MCF 10A (cell line): ENCODE measurements at regions of chr9 and their contacts with region 1.

Region 1: DNA sequence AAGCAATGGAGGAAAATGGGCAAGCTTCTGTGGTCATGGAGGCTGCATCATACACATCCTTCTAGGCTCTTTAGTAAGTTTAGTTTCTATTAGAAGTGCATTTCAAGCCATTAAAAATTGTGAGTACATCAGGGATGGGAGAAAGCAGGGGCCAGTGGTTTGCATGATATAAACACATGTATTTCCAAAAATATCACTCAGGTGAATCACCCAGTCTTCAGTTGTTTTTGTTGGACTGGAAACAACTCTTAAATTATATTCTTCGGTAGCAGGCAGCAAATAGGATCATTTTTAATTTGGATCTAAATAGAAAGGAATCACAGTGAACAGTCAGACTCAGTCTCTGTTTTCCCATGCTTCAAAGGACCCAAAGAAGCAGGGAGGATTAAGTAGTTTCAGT is 657.9 kb downstream of the TLR4 start:
- DNase-seq: peak; percentile 57
- H3K4me3 Mint-ChIP-seq: no peak overlapping the region
- H3K27ac Mint-ChIP-seq: no peak overlapping the region
- H3K4me1 Mint-ChIP-seq: peaks cover 12% of the 10 kb centered on the region
- H3K27me3 Mint-ChIP-seq: no peaks in the 10 kb centered on the region
- CTCF ChIP-seq: no peak

Region 2: GRCh38 chr9:118395415-118395814 is 33.3 kb after region 1 on chr9:
- CTCF ChIA-PET with region 1: interaction called, 3 read pairs
- POLR2A ChIA-PET with region 1: no interaction called
- intact Hi-C with region 1: loop called (anchors 1 kb)
- DNase-seq: peak; percentile 69
- H3K4me3 Mint-ChIP-seq: no peak overlapping the region
- H3K27ac Mint-ChIP-seq: no peak overlapping the region
- H3K4me1 Mint-ChIP-seq: peaks cover 11% of the 10 kb centered on the region
- H3K27me3 Mint-ChIP-seq: no peaks in the 10 kb centered on the region
- CTCF ChIP-seq: no peak